ENCODE measurements at regions of chr18 and their contacts with region 1.

Region 1: GRCh38 chr18:551404-552061 is 28.6 kb upstream of the CETN1 start:
- DNase-seq: no peak
- ATAC-seq: no peak

Region 2: DNA sequence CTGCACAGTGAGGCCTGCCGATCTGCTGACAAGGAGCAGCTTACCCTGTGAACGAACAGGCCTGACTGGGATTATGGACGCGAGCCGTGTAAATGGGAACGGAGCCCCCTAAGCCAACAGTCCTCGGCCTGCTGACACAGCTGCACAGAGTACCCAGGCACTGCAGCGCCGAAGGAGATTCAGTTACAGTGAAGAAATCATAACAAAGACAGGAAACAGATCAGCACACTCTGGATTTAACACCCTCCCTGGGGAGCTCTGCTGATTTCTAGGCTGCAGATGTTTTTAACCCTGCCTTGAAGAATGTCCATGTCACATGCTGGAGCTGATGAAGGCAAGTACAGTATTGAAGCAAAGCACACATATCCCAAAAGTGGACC is 94.4 kb before region 1 on chr18:
- intact Hi-C with region 1: no loop called
- DNase-seq: peak; percentile 70
- ATAC-seq: peak; percentile 93

Region 3: GRCh38 chr18:610214-610903 is 58.8 kb after region 1 on chr18:
- intact Hi-C with region 1: loop called (anchors 5 kb)
- DNase-seq: no peak
- ATAC-seq: peak; percentile 67

Region 4: DNA sequence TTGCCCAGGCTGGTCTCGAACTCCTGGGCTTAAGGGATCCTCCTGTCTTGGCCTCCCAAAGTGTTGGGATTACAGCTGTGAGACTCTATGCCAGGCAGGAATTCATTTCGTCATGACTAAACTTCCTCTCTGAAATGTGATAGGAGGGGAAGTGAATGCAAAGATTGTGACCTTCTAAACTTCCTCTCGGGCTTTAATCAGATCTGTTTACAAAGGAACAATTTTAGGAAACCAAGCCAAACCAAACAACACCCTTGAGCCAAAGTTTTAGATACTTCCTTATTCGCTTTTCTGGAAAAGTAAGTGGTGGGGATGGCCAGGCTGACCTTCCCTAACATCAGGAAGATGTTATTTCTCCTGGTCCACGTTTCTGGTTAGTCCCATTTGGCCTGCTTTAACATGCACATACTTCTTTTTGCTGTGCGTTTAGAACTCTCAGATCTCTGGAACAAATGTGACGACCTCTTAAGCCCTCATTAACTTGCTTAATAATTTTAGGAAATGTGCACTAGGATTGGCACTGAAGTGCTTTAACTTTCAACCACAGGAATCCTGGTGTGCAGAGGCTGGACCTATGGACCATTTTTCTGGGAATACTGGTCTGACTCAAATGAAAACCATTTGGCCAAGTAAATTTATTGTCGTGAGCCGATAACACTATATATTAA is 293.8 kb after region 1 on chr18:
- intact Hi-C with region 1: no loop called
- DNase-seq: no peak
- ATAC-seq: peak; percentile 61